Caco-2 (cell line): ENCODE measurements at regions of chr11 and their contacts with region 1.

Region 1: DNA sequence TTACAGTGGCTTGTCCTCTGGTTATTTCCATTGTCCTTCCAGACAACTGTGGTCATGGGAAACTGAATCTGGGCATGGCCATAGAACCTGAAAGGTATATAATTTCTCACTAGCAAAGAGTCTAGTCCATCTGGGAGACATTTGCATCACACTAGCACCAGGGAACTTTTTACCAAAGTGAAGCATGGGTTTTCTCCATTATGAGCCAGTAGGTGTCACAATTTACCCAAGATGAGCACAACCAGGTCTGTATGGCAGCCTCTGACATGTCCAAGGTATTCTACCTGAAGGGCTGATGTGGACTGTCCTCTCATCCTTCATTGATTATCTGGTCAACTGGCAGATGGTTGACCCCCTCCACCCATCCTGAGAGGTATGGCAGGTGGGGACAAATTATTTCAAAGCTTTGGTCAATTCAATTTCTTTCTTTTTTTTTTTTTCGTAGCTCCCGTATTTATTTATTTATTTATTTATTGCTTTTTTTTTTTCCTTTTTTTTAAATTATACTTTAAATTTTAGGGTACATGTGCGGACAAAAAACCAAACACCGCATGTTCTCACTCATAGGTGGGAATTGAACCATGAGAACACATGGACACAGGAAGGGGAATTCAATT is 425.9 kb downstream of the TMEM135 start:
- DNase-seq: peak; percentile 66 to 72
- H3K4me3 ChIP-seq: no peak overlapping the region
- H3K4me3 Mint-ChIP-seq: no peak overlapping the region
- H3K27ac Mint-ChIP-seq: no peak overlapping the region
- H3K4me1 ChIP-seq: peaks cover 27% of the 10 kb centered on the region
- H3K4me1 Mint-ChIP-seq: no peaks in the 10 kb centered on the region
- H3K27me3 ChIP-seq: no peaks in the 10 kb centered on the region
- H3K27me3 Mint-ChIP-seq: no peaks in the 10 kb centered on the region
- CTCF ChIP-seq: peak; percentile 41 to 48

Region 2: DNA sequence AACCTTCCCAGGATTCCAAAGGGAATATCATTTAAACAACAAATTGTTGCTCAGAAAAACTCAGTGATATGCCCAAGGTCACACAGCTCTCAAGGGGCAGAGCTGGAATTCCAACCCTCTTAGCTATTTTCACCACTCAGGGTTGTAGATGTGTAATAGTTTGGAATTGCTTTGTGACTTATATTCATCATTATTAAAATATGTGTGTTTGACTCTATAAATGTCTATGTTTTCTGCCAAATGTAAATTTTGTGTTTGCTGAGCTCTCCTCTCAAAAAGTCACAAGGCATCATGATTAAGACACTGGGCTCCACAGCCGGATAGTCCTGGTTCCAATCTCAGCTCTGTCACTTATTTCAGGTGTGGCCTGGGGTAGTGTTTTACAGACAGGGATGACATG is 18.6 kb before region 1 on chr11:
- CTCF ChIA-PET with region 1: no interaction called
- POLR2A ChIA-PET with region 1: no interaction called
- intact Hi-C with region 1: no loop called
- DNase-seq: no peak
- H3K4me3 ChIP-seq: no peak overlapping the region
- H3K4me3 Mint-ChIP-seq: no peak overlapping the region
- H3K27ac Mint-ChIP-seq: no peak overlapping the region
- H3K4me1 ChIP-seq: no peaks in the 10 kb centered on the region
- H3K4me1 Mint-ChIP-seq: no peaks in the 10 kb centered on the region
- H3K27me3 ChIP-seq: no peaks in the 10 kb centered on the region
- H3K27me3 Mint-ChIP-seq: no peaks in the 10 kb centered on the region
- CTCF ChIP-seq: no peak

Region 3: GRCh38 chr11:87539596-87539995 is 76.0 kb after region 1 on chr11:
- CTCF ChIA-PET with region 1: no interaction called
- POLR2A ChIA-PET with region 1: no interaction called
- intact Hi-C with region 1: no loop called
- DNase-seq: no peak
- H3K4me3 ChIP-seq: no peak overlapping the region
- H3K4me3 Mint-ChIP-seq: no peak overlapping the region
- H3K27ac Mint-ChIP-seq: no peak overlapping the region
- H3K4me1 ChIP-seq: no peaks in the 10 kb centered on the region
- H3K4me1 Mint-ChIP-seq: no peaks in the 10 kb centered on the region
- H3K27me3 ChIP-seq: no peaks in the 10 kb centered on the region
- H3K27me3 Mint-ChIP-seq: peaks cover 4% of the 10 kb centered on the region
- CTCF ChIP-seq: no peak

Region 4: GRCh38 chr11:87560352-87560751 is 96.8 kb after region 1 on chr11:
- CTCF ChIA-PET with region 1: no interaction called
- POLR2A ChIA-PET with region 1: no interaction called
- intact Hi-C with region 1: loop called (anchors 5 kb)
- DNase-seq: no peak
- H3K4me3 ChIP-seq: no peak overlapping the region
- H3K4me3 Mint-ChIP-seq: no peak overlapping the region
- H3K27ac Mint-ChIP-seq: no peak overlapping the region
- H3K4me1 ChIP-seq: no peaks in the 10 kb centered on the region
- H3K4me1 Mint-ChIP-seq: no peaks in the 10 kb centered on the region
- H3K27me3 ChIP-seq: no peaks in the 10 kb centered on the region
- H3K27me3 Mint-ChIP-seq: peaks cover 13% of the 10 kb centered on the region
- CTCF ChIP-seq: no peak

Region 5: DNA sequence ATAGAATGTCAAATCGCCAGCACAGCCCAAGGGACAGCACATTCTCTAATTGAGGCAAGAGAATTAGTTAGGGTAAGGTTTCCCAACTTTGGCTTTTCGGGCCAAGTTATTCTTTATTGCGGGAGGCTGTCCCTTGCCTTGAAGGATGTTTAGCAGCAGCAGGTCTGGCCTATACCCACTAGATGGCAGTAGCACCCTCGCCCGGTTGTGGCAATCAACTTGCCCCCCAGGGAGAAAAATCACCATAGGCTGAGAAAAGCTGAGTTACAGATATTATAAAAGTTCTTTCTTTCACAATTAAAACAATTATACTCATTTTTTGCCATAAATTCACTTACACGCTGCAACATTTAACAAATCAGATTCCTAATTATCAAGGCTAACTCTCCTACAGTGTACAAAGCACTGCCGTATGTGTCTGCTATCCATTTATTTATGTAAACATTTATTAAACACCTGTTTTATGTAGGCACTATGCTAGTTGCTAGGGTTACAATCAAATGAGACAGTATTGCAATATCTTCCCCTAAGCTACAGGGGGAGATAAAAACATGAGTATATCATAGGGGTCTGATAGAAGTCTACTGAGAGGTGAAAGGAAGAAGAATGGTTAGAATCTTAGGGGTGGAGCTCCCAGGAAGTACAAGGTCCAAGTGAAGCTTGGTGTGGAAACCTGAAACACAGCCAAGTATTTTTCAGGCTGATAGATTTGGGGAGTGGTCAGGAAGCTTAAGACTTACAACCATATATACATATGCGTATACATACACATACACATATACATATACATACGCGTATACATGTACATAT is 259.4 kb after region 1 on chr11:
- CTCF ChIA-PET with region 1: interaction called, 3 read pairs
- POLR2A ChIA-PET with region 1: no interaction called
- intact Hi-C with region 1: loop called (anchors 1 kb)
- DNase-seq: peak; percentile 54 to 65
- H3K4me3 ChIP-seq: no peak overlapping the region
- H3K4me3 Mint-ChIP-seq: no peak overlapping the region
- H3K27ac Mint-ChIP-seq: no peak overlapping the region
- H3K4me1 ChIP-seq: peaks cover 7% of the 10 kb centered on the region
- H3K4me1 Mint-ChIP-seq: peaks cover 7% of the 10 kb centered on the region
- H3K27me3 ChIP-seq: no peaks in the 10 kb centered on the region
- H3K27me3 Mint-ChIP-seq: peaks cover 3% of the 10 kb centered on the region
- CTCF ChIP-seq: peak; percentile 96

Region 6: DNA sequence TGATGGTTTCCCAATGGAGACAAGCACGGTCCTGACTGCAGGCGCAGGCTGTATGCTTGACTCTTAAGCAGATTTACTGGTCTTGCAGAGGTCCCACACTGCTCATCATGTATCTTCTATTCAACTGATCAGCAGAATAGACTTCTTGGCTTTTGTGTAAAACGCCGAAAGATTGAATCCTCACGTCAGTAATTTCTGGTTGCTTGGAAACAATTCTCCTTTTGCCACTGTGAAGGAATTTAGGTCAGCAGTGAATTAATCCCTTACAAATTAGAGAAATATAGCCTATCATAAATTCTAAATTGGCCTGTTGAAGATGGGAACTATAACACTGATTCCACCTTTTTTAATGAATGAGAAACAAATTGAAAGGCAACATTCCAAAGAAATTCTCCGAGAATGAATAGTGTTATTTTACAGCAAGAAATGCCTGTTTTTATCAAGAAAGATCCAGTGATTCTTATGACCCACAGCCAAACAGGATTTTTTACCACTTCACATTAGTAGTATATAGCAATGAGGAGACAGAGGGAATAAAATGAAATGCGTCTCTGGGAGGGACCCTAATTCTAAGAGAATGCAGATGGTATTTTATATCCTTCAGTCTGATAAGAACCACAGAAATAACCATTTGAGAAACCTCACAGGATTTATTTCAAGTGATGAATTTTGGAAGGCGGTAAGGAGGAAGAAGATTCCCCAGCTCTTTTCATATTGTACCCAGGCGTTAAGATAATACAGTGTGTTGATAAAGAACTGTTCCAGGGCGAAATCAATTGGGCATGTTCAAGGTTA is 349.2 kb after region 1 on chr11:
- CTCF ChIA-PET with region 1: no interaction called
- POLR2A ChIA-PET with region 1: no interaction called
- intact Hi-C with region 1: loop called (anchors 2 kb)
- DNase-seq: no peak
- H3K4me3 ChIP-seq: no peak overlapping the region
- H3K4me3 Mint-ChIP-seq: no peak overlapping the region
- H3K27ac Mint-ChIP-seq: no peak overlapping the region
- H3K4me1 ChIP-seq: peaks cover 15% of the 10 kb centered on the region
- H3K4me1 Mint-ChIP-seq: peaks cover 24% of the 10 kb centered on the region
- H3K27me3 ChIP-seq: no peaks in the 10 kb centered on the region
- H3K27me3 Mint-ChIP-seq: no peaks in the 10 kb centered on the region
- CTCF ChIP-seq: no peak

Region 7: GRCh38 chr11:88016392-88017170 is 553.0 kb after region 1 on chr11:
- CTCF ChIA-PET with region 1: no interaction called
- POLR2A ChIA-PET with region 1: no interaction called
- intact Hi-C with region 1: loop called (anchors 1 kb)
- DNase-seq: peak; percentile 83 to 88
- H3K4me3 ChIP-seq: no peak overlapping the region
- H3K4me3 Mint-ChIP-seq: no peak overlapping the region
- H3K27ac Mint-ChIP-seq: no peak overlapping the region
- H3K4me1 ChIP-seq: no peaks in the 10 kb centered on the region
- H3K4me1 Mint-ChIP-seq: peaks cover 6% of the 10 kb centered on the region
- H3K27me3 ChIP-seq: no peaks in the 10 kb centered on the region
- H3K27me3 Mint-ChIP-seq: no peaks in the 10 kb centered on the region
- CTCF ChIP-seq: peak; percentile 88 to 89